ENCODE measurements at regions of chr9 and their contacts with region 1.

Region 1: GRCh38 chr9:83538172-83538889 is at the start of gene FRMD3:
- DNase-seq: peak; percentile 92
- total RNA-seq, gene FRMD3: 123 TPM

Region 2: GRCh38 chr9:83219152-83219923 is 319.0 kb before region 1 on chr9:
- intact Hi-C with region 1: loop called (anchors 2 kb)
- DNase-seq: peak; percentile 88

Region 3: DNA sequence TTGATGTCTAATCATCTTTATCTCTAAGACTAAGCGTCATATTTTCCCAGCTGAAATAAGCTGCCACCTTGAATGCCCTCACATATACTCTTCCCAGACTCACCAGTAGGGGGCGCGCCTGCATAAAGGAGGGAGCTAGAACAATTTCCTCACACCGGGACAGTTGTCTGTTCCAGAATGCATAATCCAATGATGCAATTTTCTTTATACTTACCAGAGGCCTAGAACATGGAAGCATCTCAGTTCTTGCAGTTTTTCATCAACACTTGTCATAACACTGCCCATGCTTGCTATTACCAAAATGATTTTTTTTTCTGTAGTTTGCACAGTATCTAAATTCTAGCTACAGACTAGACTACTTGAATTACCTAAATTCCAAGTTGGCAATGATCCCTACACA is 204.0 kb before region 1 on chr9:
- intact Hi-C with region 1: loop called (anchors 2 kb)
- DNase-seq: peak; percentile 91

Region 4: GRCh38 chr9:83432104-83432639 is 106.2 kb before region 1 on chr9:
- intact Hi-C with region 1: loop called (anchors 5 kb)
- DNase-seq: peak; percentile 81

Region 5: GRCh38 chr9:83469722-83470121 is 68.6 kb before region 1 on chr9:
- intact Hi-C with region 1: loop called (anchors 5 kb)
- DNase-seq: no peak

Measured in cardiac septum (tissue), 1 donor.